Common myeloid progenitor, CD34-positive (primary cell): ENCODE measurements at regions of chr3 and their contacts with region 1.

Region 1: GRCh38 chr3:100316641-100317069 is 17.9 kb upstream of the NIT2 start:
- DNase-seq: peak; percentile 74 to 87 (median 82)
- H3K4me3 ChIP-seq: peak overlapping the region in 2 of 7 experiments; percentile 12 to 19
- H3K27ac ChIP-seq: no peak overlapping the region
- H3K4me1 ChIP-seq: peaks cover 0 to 4% (median 2%) of the 10 kb centered on the region in 4 experiments
- H3K27me3 ChIP-seq: no peaks in the 10 kb centered on the region

Region 2: GRCh38 chr3:100260685-100261484 is 55.8 kb before region 1 on chr3 and contains the start of gene TBC1D23:
- CTCF ChIA-PET with region 1: no interaction called
- POLR2A ChIA-PET with region 1: no interaction called
- DNase-seq: peak; percentile 99 to 100 (median 100)
- H3K4me3 ChIP-seq: peak within 1 kb of the TSS; percentile 75 to 98 (median 97)
- H3K27ac ChIP-seq: peak within 1 kb of the TSS; percentile 93 to 95
- H3K4me1 ChIP-seq: peaks cover 5 to 17% (median 16%) of the 10 kb centered on the region in 4 experiments
- H3K27me3 ChIP-seq: no peaks in the 10 kb centered on the region

Region 3: DNA sequence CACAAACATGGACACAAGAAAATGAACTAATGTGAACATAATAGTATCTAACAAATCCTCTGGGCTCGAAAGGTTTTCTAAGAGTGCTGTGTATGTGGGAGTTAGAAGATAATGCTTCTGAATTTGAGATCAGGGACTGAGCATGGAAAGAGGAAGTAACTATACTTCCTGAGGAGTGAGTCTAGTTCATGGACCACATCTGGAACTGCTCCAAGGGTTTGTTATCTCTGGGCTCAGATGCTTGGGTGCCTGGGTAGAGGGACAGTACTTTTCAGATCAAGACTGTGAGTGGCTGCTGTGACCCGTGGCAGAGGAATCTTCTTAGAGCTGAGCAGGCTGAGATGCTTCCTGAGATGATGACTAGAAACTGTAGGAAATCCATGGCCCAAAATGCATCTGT is 27.3 kb before region 1 on chr3:
- CTCF ChIA-PET with region 1: interaction called, 11 read pairs
- POLR2A ChIA-PET with region 1: no interaction called
- DNase-seq: peak; percentile 89 to 96 (median 96)
- H3K4me3 ChIP-seq: no peak overlapping the region
- H3K27ac ChIP-seq: peak overlapping the region in 1 of 2 experiments; percentile 41
- H3K4me1 ChIP-seq: peaks cover 0 to 21% (median 15%) of the 10 kb centered on the region in 4 experiments
- H3K27me3 ChIP-seq: no peaks in the 10 kb centered on the region

Region 4: DNA sequence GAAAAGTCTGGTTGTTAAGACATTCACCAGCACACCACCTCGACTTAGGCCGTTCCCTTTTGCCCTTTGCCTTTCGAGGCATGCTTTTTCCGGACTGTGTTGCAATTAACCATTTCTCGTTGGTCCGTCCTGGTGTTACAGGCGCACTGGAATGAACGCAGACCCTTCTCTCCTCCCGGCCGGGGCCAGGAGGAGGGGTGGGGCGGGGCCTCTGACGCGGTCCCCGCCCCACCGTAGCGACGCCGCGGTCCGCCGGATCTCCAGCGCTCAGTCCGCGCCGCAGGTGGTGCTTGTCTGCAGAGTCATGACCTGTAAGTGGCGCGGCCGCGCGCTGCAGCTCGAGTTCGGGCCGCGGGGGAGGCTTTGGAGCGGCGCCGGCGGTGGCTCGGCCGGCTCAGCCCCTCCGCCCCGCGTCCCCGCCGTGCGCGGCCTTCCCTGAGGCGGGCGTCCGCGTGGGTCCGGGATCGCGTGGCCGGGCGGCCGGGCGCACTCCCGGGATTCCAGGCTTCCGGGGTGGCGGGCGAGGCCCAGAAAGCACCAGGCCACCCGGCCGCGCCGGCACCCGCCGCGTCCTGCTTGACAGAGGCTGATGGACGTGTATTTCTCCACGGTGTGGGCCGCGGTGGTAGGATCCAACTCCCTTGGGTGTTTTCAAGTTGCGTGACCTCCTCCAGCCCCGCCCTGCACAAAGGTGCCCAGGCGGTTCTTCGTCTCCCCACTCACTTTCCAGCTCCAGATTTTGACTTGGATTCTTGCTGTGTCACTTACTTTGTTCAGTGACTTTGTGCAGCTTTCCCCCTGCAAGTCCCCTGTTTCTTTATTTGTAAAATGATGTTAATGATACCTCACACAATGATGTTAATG is 18.1 kb after region 1 on chr3 and contains the start of gene NIT2:
- CTCF ChIA-PET with region 1: interaction called, 11 read pairs
- POLR2A ChIA-PET with region 1: no interaction called
- DNase-seq: peak; percentile 85 to 90 (median 87)
- H3K4me3 ChIP-seq: peak within 1 kb of the TSS; percentile 64 to 90 (median 78)
- H3K27ac ChIP-seq: peak within 1 kb of the TSS; percentile 50 to 66
- H3K4me1 ChIP-seq: peaks cover 0 to 24% (median 19%) of the 10 kb centered on the region in 4 experiments
- H3K27me3 ChIP-seq: no peaks in the 10 kb centered on the region

Region 5: DNA sequence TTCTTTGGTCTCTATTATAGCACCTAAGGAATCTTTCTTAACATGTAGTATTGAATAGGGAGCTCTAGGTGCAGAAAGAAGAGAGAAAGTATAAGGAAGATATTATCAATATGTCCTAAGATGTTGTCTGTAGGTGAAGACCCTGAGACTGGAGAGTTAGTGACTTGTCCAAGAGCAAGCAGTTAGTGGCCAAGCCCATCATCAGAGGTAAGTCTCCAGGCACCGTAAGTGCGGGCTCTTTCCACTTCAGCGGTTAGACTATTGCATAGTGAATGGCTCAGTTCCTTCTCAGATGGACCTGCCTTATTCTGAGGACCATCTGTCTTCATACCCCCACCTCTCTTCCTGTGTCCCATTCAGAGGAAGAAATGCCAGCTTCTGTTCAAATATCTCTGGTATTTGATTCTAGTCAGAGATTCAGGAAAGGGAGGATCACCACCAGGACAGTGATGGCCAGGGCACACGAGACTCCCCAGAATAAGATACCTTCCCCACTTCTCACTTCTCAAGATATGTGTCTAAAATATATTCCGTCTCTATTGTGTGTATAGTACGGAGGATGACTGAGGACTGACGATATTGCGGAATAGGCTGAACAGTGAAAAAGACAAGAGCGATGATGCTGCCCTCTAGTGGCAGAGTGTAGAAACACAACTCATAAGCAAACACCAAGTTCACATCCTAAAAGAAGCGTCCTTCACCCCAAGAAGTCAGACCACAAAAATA is 273.6 kb after region 1 on chr3:
- CTCF ChIA-PET with region 1: interaction called, 14 read pairs
- POLR2A ChIA-PET with region 1: no interaction called
- DNase-seq: peak; percentile 71 to 88 (median 81)
- H3K4me3 ChIP-seq: peak overlapping the region in 2 of 7 experiments; percentile 33 to 51
- H3K27ac ChIP-seq: no peak overlapping the region
- H3K4me1 ChIP-seq: peaks cover 0 to 3% (median 1%) of the 10 kb centered on the region in 4 experiments
- H3K27me3 ChIP-seq: no peaks in the 10 kb centered on the region

Region 6: GRCh38 chr3:100708967-100709841 is 392.5 kb after region 1 on chr3 and contains the start of gene TFG:
- CTCF ChIA-PET with region 1: interaction called, 12 read pairs
- POLR2A ChIA-PET with region 1: no interaction called
- DNase-seq: peak; percentile 98 to 100 (median 99)
- H3K4me3 ChIP-seq: peak within 1 kb of the TSS; percentile 61 to 92 (median 80)
- H3K27ac ChIP-seq: peak within 1 kb of the TSS; percentile 84 to 91
- H3K4me1 ChIP-seq: peaks cover 8 to 23% (median 18%) of the 10 kb centered on the region in 4 experiments
- H3K27me3 ChIP-seq: no peaks in the 10 kb centered on the region